ENCODE measurements at regions of chr15 and their contacts with region 1.

Region 1: DNA sequence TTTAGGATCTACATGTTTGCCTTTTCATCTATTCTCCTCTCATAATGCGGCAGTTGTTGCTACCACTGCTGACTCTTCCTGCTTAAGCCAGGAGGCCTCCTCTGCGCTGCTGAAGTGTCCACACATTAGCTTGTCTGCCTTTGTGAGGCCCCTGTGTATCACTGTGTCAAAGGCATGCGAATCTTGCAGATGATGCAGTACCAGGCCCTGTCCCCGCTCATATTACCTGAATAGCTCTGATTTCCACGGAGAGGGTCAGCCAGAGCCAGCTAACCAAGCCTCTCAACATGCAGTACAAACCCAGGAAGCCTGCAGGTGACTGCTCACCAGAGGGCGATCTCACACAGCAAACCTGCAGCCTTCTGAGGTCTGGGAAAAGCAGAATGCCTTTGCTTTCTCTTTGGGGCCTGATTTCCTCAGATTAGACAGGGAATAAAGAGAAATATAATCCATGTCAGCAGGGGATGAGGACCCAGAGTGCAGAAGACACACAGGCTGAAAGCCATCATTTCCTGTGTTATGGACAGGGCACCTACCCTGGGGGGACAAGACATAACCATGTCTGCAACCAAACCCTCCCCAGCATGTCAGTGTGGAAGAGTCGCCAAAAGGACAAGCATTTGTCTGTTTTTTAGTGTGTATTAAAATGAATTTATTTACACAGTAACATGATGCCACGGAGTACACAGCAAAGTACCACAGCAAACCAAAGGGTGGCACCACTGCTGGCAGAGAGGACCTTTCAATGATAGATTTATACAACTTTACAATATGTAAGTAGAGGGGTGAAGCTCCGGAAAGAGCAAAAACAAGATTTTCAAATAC is 36.8 kb upstream of the TSPAN3 start:
- DNase-seq: peak; percentile 69 to 70
- H3K4me3 ChIP-seq: no peak overlapping the region
- H3K4me3 Mint-ChIP-seq: no peak overlapping the region
- H3K27ac Mint-ChIP-seq: peak overlapping the region; percentile 65
- H3K4me1 ChIP-seq: peaks cover 8% of the 10 kb centered on the region
- H3K4me1 Mint-ChIP-seq: peaks cover 13% of the 10 kb centered on the region
- H3K27me3 ChIP-seq: no peaks in the 10 kb centered on the region
- H3K27me3 Mint-ChIP-seq: no peaks in the 10 kb centered on the region
- CTCF ChIP-seq: peak; percentile 73 to 86

Region 2: GRCh38 chr15:77024271-77025082 is 83.3 kb before region 1 on chr15:
- CTCF ChIA-PET with region 1: interaction called, 5 read pairs
- POLR2A ChIA-PET with region 1: no interaction called
- intact Hi-C with region 1: loop called (anchors 1 kb)
- DNase-seq: peak; percentile 48 to 82
- H3K4me3 ChIP-seq: no peak overlapping the region
- H3K4me3 Mint-ChIP-seq: no peak overlapping the region
- H3K27ac Mint-ChIP-seq: no peak overlapping the region
- H3K4me1 ChIP-seq: no peaks in the 10 kb centered on the region
- H3K4me1 Mint-ChIP-seq: no peaks in the 10 kb centered on the region
- H3K27me3 ChIP-seq: no peaks in the 10 kb centered on the region
- H3K27me3 Mint-ChIP-seq: no peaks in the 10 kb centered on the region
- CTCF ChIP-seq: peak; percentile 93 to 96

Region 3: DNA sequence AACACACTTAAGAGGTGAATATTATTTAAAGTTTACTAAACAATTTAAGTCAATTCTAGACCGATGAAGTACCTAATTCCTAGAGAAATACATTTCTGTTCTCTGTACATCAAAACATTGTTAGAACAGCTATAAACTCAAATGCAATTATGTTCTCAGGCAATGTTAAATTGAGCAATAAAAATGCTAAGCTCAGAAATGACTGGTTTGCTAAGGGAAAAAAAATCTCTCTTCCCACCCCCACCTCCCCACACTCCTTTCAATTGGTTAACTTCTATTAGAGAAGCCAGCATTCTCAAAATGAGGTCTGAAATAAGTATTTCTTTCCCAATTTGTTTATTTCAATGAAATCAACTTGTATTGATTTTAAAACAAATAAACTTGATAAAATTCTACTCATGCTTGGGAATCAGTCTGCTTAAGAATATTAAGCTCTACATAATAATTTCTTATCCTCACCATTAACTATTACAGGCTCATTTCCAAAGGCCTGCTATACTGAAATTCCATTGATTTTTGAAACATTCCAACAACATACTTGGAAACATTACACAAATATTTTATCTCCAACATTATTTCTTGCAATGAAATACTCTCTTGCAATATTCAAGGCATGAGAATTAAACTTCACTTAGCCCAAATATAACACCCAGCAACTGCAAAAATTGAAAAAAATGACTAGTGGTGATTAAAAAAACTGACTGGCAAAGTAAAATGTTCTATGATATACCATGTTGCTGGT is 59.4 kb before region 1 on chr15:
- CTCF ChIA-PET with region 1: no interaction called
- POLR2A ChIA-PET with region 1: no interaction called
- intact Hi-C with region 1: no loop called
- DNase-seq: no peak
- H3K4me3 ChIP-seq: no peak overlapping the region
- H3K4me3 Mint-ChIP-seq: no peak overlapping the region
- H3K27ac Mint-ChIP-seq: no peak overlapping the region
- H3K4me1 ChIP-seq: peaks cover 6% of the 10 kb centered on the region; the same call in 1 of the 2 replicates
- H3K4me1 Mint-ChIP-seq: peaks cover 6% of the 10 kb centered on the region
- H3K27me3 ChIP-seq: no peaks in the 10 kb centered on the region
- H3K27me3 Mint-ChIP-seq: no peaks in the 10 kb centered on the region
- CTCF ChIP-seq: no peak

Region 4: DNA sequence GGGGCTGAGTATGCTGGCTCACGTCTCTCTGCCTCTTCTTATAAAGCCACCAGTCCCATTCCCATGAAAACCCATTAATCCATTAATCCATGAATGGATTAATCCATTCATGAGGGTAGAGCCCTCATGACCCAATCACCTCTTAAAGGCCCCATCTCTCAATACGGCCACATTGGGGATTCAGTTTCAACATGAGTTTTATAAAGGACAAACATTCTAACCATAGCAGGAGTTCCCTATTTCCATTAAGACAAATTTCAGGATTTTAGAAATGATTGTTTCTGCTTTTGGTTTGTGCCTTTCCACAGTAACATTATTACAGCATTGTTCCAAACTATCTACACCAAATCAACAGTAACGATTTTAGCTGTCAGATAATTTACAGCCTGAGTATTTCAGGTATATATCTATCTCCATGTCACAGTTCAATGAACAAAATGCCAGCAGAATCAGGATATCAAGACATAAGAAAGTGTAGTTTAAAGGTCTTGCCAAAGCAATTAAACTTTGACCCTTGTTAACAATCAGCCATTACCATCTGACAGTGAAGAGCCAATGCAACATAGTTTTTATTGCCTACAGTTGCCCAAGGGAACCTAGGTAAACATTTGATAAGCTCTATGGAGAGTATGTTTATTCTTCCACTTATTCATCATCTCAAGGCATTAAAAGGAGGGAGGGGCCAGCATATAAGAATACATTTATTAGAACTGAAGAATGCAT is 40.6 kb before region 1 on chr15:
- CTCF ChIA-PET with region 1: interaction called, 3 read pairs
- POLR2A ChIA-PET with region 1: no interaction called
- intact Hi-C with region 1: loop called (anchors 1 kb)
- DNase-seq: peak in 1 of 2 experiments; percentile 75
- H3K4me3 ChIP-seq: no peak overlapping the region
- H3K4me3 Mint-ChIP-seq: peak overlapping the region; percentile 64
- H3K27ac Mint-ChIP-seq: peak overlapping the region; percentile 80
- H3K4me1 ChIP-seq: peaks cover 47% of the 10 kb centered on the region
- H3K4me1 Mint-ChIP-seq: peaks cover 53% of the 10 kb centered on the region
- H3K27me3 ChIP-seq: no peaks in the 10 kb centered on the region
- H3K27me3 Mint-ChIP-seq: no peaks in the 10 kb centered on the region
- CTCF ChIP-seq: no peak

Region 5: GRCh38 chr15:77186594-77187011 is 78.9 kb after region 1 on chr15:
- CTCF ChIA-PET with region 1: interaction called, 3 read pairs
- POLR2A ChIA-PET with region 1: no interaction called
- intact Hi-C with region 1: loop called (anchors 1 kb)
- DNase-seq: no peak
- H3K4me3 ChIP-seq: no peak overlapping the region
- H3K4me3 Mint-ChIP-seq: no peak overlapping the region
- H3K27ac Mint-ChIP-seq: peak overlapping the region; percentile 25
- H3K4me1 ChIP-seq: peaks cover 28% of the 10 kb centered on the region
- H3K4me1 Mint-ChIP-seq: peaks cover 14% of the 10 kb centered on the region
- H3K27me3 ChIP-seq: no peaks in the 10 kb centered on the region
- H3K27me3 Mint-ChIP-seq: no peaks in the 10 kb centered on the region
- CTCF ChIP-seq: peak; percentile 43 to 44

Region 6: DNA sequence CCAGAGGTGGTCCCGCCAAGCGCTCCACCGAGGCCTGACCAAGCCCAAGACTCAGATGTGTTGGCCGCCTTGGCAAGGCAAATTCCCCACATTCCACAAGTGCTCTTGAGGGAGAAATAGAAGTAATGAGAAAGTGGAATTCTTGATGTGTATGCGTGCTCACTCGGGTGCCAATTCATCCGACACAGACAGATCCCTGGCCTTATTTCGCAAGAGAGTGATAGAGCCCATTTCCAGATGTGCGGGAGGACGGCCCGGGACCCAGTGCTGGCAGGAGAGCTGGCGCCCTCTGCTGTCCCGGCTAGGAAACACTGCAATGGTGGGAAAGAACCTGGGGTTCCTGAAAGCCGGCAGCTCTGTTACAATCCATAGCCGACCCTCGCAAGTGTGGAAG is 389.0 kb after region 1 on chr15:
- CTCF ChIA-PET with region 1: interaction called, 5 read pairs
- POLR2A ChIA-PET with region 1: no interaction called
- intact Hi-C with region 1: loop called (anchors 2 kb)
- DNase-seq: peak; percentile 79 to 82
- H3K4me3 ChIP-seq: no peak overlapping the region
- H3K4me3 Mint-ChIP-seq: no peak overlapping the region
- H3K27ac Mint-ChIP-seq: no peak overlapping the region
- H3K4me1 ChIP-seq: no peaks in the 10 kb centered on the region
- H3K4me1 Mint-ChIP-seq: peaks cover 15% of the 10 kb centered on the region
- H3K27me3 ChIP-seq: no peaks in the 10 kb centered on the region
- H3K27me3 Mint-ChIP-seq: no peaks in the 10 kb centered on the region
- CTCF ChIP-seq: peak; percentile 83 to 90

Region 7: GRCh38 chr15:77821188-77821958 is 713.6 kb after region 1 on chr15:
- CTCF ChIA-PET with region 1: interaction called, 3 read pairs
- POLR2A ChIA-PET with region 1: no interaction called
- intact Hi-C with region 1: loop called (anchors 5 kb)
- DNase-seq: peak; percentile 59 to 74
- H3K4me3 ChIP-seq: no peak overlapping the region
- H3K4me3 Mint-ChIP-seq: no peak overlapping the region
- H3K27ac Mint-ChIP-seq: no peak overlapping the region
- H3K4me1 ChIP-seq: 0 out of 2 replicates have a peak, but pooled peaks cover 4% of the 10 kb centered on the region
- H3K4me1 Mint-ChIP-seq: no peaks in the 10 kb centered on the region
- H3K27me3 ChIP-seq: peaks cover 3% of the 10 kb centered on the region
- H3K27me3 Mint-ChIP-seq: peaks cover 23% of the 10 kb centered on the region
- CTCF ChIP-seq: peak; percentile 71 to 89